Mucosa of descending colon (tissue), 3 donors: ENCODE measurements at regions of chr1 and their contacts with region 1.

Region 1: GRCh38 chr1:24235921-24236781 is 49.1 kb upstream of the IFNLR1 start:
- DNase-seq: no peak
- ATAC-seq: peak; percentile 64
- H3K4me3 ChIP-seq: no peak overlapping the region
- H3K4me1 ChIP-seq: no peaks in the 10 kb centered on the region
- CTCF ChIP-seq: no peak

Region 2: GRCh38 chr1:24070821-24071393 is 165.2 kb before region 1 on chr1:
- intact Hi-C with region 1: no loop called
- DNase-seq: peak in 2 of 3 donors; percentile 74 to 92
- ATAC-seq: peak; percentile 95
- H3K4me3 ChIP-seq: no peak overlapping the region
- H3K4me1 ChIP-seq: peaks cover 3% of the 10 kb centered on the region
- CTCF ChIP-seq: peak; percentile 76

Region 3: DNA sequence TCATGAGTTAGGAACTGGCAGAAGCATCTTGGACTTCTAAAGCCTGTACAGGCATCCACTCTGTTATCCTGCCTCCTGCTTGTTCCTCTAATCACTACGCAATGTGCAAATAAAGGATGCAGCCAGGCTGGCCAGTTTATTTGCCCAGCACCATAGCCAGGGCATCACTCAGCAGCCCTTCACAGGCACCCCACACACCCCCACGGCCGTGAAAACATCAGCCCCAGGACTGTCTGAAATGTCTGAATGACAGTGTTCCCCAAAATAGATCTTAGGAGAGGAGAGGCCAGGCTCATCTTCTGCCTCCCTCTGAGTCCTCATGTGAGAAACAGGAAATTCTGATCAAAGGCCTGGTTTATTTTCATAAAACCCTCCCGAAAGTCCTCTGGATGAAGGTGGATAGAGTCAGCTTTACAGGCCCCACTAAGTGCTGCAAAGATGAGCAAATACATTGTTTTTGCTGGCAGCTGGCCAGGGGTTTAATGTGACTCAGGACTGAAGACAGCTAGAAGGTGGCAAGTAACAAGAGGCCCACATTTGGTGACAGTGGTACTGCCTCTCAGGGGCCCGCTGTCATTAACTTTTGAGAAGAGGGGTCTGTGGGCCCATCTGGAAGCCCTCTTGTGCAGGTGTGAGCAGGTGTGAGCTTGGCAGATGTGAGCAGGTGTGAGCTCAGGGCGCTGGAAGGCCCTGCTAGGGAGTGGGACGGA is 115.9 kb after region 1 on chr1:
- intact Hi-C with region 1: loop called in 1 of 2 experiments (anchors 10 kb)
- DNase-seq: no peak
- ATAC-seq: no peak
- H3K4me3 ChIP-seq: no peak overlapping the region
- H3K4me1 ChIP-seq: no peaks in the 10 kb centered on the region
- CTCF ChIP-seq: no peak